ENCODE measurements at regions of chr20 and their contacts with region 1.

Region 1: DNA sequence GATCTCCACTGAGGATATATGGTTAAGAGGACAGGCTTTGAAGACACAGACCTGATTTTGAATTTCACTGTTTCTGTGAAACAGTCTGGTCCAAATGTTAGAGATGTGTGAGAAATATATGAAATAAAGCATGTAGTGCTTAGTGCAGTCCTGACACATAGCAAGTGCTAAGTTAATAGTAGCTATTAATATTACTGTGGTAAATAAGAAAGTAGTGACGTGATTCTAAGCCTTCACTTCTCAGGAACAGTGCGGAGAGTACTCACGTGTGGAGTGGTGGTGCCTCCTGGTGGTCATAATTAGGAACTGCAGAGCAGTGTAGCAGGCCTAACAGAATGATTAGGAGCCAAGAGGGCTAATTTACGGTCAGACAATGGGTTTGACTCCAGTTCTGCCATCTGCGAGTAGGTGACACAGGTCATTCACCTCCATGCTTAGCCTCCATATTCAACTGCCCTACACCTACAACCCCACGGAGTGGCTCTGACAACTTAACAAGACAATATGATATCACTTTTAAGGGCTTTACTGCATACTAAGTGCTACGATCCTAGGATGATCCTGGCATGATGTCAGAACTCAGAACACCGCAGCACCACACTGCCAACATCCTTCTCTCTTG is 106.2 kb downstream of the JPH2 start:
- DNase-seq: peak; percentile 58 to 80
- H3K4me3 ChIP-seq: no peak overlapping the region
- H3K27ac ChIP-seq: no peak overlapping the region
- H3K4me1 ChIP-seq: peaks cover 17% of the 10 kb centered on the region
- H3K27me3 ChIP-seq: no peaks in the 10 kb centered on the region
- CTCF ChIP-seq: peak; percentile 100

Region 2: DNA sequence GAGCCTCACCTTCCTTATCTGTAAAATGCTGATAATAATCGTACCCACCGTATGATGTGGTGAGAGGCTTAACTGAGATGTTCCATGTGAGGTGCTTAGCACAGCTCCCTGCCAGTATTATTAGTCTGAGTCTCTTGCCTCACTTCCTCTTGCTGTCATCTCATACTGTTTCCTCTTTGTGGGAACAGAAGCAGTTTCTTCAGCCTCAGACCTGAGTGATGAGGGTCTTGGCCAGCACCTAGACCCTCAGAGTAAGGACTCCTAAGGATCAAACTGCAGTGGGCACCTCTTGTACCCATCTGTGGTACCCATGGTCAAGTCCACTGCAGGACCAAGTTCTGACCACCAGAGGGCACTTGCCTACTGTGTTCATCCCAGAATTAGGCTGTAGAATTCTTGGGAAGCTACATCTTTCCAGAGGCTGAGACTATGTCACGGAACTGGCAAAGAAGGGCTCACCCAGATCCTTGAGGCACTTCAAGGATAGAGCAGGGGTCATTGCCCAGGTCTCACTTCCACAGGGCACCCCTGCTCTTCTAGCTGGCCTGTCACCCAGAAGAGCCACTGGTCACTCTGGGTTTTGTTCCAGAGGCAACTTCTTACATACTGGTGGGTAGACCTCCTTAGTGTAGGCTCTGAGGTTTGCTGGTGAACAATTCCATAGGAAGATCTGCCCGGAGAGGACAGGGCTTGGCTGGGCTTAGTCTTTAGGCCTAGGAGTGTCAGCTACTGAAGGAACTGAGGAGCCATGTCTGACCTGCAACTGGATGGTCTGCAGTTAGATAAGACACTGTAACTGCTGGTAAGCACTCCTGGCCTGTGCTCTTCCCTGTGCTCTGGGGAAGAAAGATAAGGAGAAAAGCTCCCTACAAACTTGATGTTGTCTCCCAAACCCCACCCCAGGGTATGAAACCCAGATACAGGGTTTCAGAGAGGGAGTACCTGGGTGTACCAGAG is 542.6 kb before region 1 on chr20:
- CTCF ChIA-PET with region 1: no interaction called
- POLR2A ChIA-PET with region 1: no interaction called
- intact Hi-C with region 1: loop called (anchors 1 kb)
- DNase-seq: peak; percentile 46 to 65
- H3K4me3 ChIP-seq: no peak overlapping the region
- H3K27ac ChIP-seq: no peak overlapping the region
- H3K4me1 ChIP-seq: peaks cover 13% of the 10 kb centered on the region
- H3K27me3 ChIP-seq: no peaks in the 10 kb centered on the region
- CTCF ChIP-seq: peak; percentile 98

Region 3: GRCh38 chr20:43840382-43841070 is 240.2 kb before region 1 on chr20:
- CTCF ChIA-PET with region 1: interaction called, 4 read pairs
- POLR2A ChIA-PET with region 1: no interaction called
- intact Hi-C with region 1: loop called (anchors 1 kb)
- DNase-seq: peak in 1 of 2 experiments; percentile 15
- H3K4me3 ChIP-seq: no peak overlapping the region
- H3K27ac ChIP-seq: no peak overlapping the region
- H3K4me1 ChIP-seq: peaks cover 39% of the 10 kb centered on the region
- H3K27me3 ChIP-seq: no peaks in the 10 kb centered on the region
- CTCF ChIP-seq: peak; percentile 66

Region 4: GRCh38 chr20:43942661-43943290 is 138.0 kb before region 1 on chr20:
- CTCF ChIA-PET with region 1: interaction called, 4 read pairs
- POLR2A ChIA-PET with region 1: no interaction called
- intact Hi-C with region 1: loop called (anchors 5 kb)
- DNase-seq: peak; percentile 70 to 85
- H3K4me3 ChIP-seq: peak overlapping the region; percentile 53
- H3K27ac ChIP-seq: peak overlapping the region; percentile 95
- H3K4me1 ChIP-seq: peaks cover 68% of the 10 kb centered on the region
- H3K27me3 ChIP-seq: no peaks in the 10 kb centered on the region
- CTCF ChIP-seq: no peak

Region 5: DNA sequence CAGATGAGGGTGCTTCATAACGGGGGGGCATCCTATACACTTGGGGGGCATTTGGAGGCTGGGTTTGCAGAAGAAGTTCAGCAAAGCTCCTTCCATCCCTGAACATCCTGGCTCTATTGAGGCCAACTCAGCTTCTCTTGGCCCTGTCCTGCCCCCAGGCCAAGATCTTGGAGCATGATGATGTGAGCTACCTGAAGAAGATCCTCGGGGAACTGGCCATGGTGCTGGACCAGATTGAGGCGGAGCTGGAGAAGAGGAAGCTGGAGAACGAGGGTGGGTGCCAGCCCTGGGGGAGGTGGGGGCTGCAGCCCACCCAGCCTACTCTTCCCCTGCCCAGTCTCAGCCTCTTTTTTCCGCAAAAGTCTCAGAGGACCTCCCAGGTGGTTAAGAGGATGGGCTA is 183.5 kb after region 1 on chr20:
- CTCF ChIA-PET with region 1: no interaction called
- POLR2A ChIA-PET with region 1: no interaction called
- intact Hi-C with region 1: no loop called
- DNase-seq: no peak
- H3K4me3 ChIP-seq: no peak overlapping the region
- H3K27ac ChIP-seq: no peak overlapping the region
- H3K4me1 ChIP-seq: no peaks in the 10 kb centered on the region
- H3K27me3 ChIP-seq: peaks cover 57% of the 10 kb centered on the region; the same call in 1 of the 2 replicates
- CTCF ChIP-seq: no peak

Measured in PC-9 (cell line).